ENCODE measurements at regions of chr9 and their contacts with region 1.

Region 1: DNA sequence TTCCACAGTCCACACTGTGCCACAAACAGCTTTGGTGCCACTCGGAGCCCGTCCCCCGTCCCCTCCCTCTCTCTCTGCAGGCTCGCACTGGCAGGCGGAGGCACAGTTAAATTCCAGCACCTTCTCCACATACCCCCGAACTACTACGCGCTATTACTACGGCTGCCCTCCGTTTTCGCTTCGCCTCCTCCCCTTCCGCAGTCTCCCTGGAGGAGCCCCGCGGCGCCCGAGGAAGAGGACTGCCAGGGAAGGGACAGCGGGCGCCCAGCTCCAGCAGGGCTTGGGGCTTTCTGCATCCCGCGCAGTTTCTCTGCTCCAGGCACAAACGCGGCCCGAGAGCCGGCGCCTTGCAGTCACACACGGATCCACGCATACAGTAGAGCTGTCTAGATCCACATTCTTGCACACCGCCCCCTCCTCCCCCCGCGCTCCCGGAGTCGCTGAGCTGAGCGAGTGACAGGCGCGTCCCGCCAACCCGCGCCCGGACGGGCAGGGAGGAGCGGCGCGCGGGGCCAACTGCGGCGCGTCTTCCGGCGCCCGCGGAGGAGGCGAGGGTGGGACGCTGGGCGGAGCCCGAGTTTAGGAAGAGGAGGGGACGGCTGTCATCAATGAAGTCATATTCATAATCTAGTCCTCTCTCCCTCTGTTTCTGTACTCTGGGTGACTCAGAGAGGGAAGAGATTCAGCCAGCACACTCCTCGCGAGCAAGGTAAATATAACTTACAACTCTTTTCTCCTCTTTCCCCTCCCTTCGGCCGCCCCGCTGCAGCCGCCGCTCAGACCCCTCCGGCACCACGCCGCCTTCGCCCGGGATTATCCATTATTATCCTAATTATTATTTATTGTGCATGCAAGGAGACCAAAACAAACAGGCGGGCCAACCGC is at the start of gene SMARCA2:
- DNase-seq: peak; percentile 96
- H3K4me3 Mint-ChIP-seq: peak within 1 kb of the TSS; percentile 90
- H3K27ac Mint-ChIP-seq: peak within 1 kb of the TSS; percentile 80
- H3K4me1 Mint-ChIP-seq: peaks cover 24% of the 10 kb centered on the region
- H3K27me3 Mint-ChIP-seq: peaks cover 10% of the 10 kb centered on the region
- CTCF ChIP-seq: no peak
- total RNA-seq, gene SMARCA2: 75.6 and 77.6 TPM in 2 replicates

Region 2: GRCh38 chr9:1400983-1401382 is 614.0 kb before region 1 on chr9:
- CTCF ChIA-PET with region 1: no interaction called
- POLR2A ChIA-PET with region 1: no interaction called
- intact Hi-C with region 1: no loop called
- DNase-seq: no peak
- H3K4me3 Mint-ChIP-seq: no peak overlapping the region
- H3K27ac Mint-ChIP-seq: no peak overlapping the region
- H3K4me1 Mint-ChIP-seq: no peaks in the 10 kb centered on the region
- H3K27me3 Mint-ChIP-seq: peaks cover 3% of the 10 kb centered on the region
- CTCF ChIP-seq: no peak

Region 3: DNA sequence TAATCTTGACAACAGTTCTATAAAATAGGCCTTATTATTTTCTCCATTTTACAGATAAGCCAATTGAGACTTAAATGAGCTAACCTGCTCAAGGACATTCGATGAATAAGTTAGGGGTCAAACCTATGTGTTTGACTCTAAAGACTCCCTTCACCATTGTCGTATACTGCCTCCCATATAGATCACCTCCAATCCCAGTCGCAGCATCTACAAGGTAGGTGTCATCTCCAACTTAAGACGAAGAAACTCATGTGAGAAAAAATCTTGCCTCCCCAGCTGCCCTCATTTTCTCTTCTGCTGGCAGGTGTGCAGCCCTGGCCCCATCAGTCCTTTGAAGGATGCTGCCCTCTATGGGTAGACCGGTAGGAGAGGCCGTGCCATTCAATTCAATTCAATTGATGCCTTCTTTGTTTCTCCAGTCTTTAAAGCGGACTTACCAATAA is 75.0 kb before region 1 on chr9:
- CTCF ChIA-PET with region 1: no interaction called
- POLR2A ChIA-PET with region 1: interaction called, 5 read pairs
- intact Hi-C with region 1: loop called (anchors 2 kb)
- DNase-seq: peak; percentile 47
- H3K4me3 Mint-ChIP-seq: no peak overlapping the region
- H3K27ac Mint-ChIP-seq: no peak overlapping the region
- H3K4me1 Mint-ChIP-seq: no peaks in the 10 kb centered on the region
- H3K27me3 Mint-ChIP-seq: peaks cover 32% of the 10 kb centered on the region
- CTCF ChIP-seq: peak; percentile 58

Region 4: GRCh38 chr9:1998111-1998510 is 16.8 kb before region 1 on chr9:
- CTCF ChIA-PET with region 1: no interaction called
- POLR2A ChIA-PET with region 1: interaction called, 12 read pairs
- intact Hi-C with region 1: no loop called
- DNase-seq: no peak
- H3K4me3 Mint-ChIP-seq: no peak overlapping the region
- H3K27ac Mint-ChIP-seq: no peak overlapping the region
- H3K4me1 Mint-ChIP-seq: no peaks in the 10 kb centered on the region
- H3K27me3 Mint-ChIP-seq: peaks cover 37% of the 10 kb centered on the region
- CTCF ChIP-seq: no peak

Region 5: GRCh38 chr9:2066312-2067273 is 51.7 kb after region 1 on chr9:
- CTCF ChIA-PET with region 1: no interaction called
- POLR2A ChIA-PET with region 1: interaction called, 3 read pairs
- intact Hi-C with region 1: loop called (anchors 5 kb)
- DNase-seq: no peak
- H3K4me3 Mint-ChIP-seq: no peak overlapping the region
- H3K27ac Mint-ChIP-seq: no peak overlapping the region
- H3K4me1 Mint-ChIP-seq: no peaks in the 10 kb centered on the region
- H3K27me3 Mint-ChIP-seq: no peaks in the 10 kb centered on the region
- CTCF ChIP-seq: no peak

Region 6: DNA sequence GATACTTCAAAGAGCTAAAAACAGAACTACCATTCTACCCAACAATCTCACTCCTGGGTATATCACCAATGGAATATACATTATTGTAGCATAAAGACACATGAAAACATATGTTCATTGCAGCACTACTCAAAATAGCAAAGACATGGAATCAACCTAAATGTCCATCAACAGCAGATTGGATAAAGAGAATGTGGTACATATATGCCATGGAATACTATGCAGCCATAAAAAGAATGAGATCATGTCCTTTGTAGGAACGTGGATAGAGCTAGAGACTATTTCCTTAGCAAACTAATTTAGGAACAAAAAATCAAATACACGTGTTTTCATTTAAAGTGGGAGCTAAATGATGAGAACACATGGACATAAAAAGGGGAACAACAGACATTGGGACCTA is 358.7 kb after region 1 on chr9:
- CTCF ChIA-PET with region 1: no interaction called
- POLR2A ChIA-PET with region 1: no interaction called
- intact Hi-C with region 1: no loop called
- DNase-seq: no peak
- H3K4me3 Mint-ChIP-seq: no peak overlapping the region
- H3K27ac Mint-ChIP-seq: no peak overlapping the region
- H3K4me1 Mint-ChIP-seq: no peaks in the 10 kb centered on the region
- H3K27me3 Mint-ChIP-seq: no peaks in the 10 kb centered on the region
- CTCF ChIP-seq: no peak

Region 7: DNA sequence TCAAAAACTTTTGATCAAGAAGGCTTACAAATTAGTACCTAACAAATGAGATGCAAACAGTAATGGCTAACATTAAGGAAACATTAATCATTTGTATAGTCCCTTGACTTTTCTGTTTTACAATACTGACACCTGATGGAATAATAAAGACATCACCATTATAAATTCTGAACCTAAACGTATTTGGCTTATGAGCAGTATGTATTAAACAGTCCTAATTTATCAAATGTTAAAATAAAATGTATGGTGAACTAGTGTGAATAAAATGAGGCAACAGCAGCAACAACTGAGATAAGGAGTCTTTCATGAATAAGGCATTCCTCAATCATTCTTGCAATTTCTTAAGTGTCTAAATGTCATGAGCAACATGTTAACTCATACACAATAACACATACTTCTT is 823.0 kb after region 1 on chr9:
- CTCF ChIA-PET with region 1: no interaction called
- POLR2A ChIA-PET with region 1: no interaction called
- intact Hi-C with region 1: loop called (anchors 5 kb)
- DNase-seq: no peak
- H3K4me3 Mint-ChIP-seq: peak overlapping the region; percentile 63
- H3K27ac Mint-ChIP-seq: peak overlapping the region; percentile 84
- H3K4me1 Mint-ChIP-seq: peaks cover 24% of the 10 kb centered on the region
- H3K27me3 Mint-ChIP-seq: no peaks in the 10 kb centered on the region
- CTCF ChIP-seq: peak; percentile 35